ENCODE measurements at regions of chr13 and their contacts with region 1.

Region 1: DNA sequence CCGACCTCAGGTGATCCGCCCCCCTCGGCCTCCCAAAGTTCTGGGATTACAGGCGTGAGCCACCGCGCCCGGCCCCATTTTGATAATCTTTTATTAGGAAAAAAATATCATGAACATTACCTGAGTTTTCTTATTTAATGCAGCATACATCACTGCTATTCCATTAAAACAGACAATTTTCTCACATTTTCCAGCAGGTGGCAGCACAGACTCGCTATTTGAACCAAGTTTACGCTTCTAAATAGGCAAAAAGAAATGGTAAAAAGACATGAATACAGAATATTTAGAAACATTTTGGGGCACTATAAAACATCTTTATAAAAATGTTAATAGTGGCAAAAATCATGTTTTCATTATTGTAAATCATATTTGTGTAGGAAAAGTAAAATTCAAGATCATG is 903.1 kb downstream of the SLITRK6 start:
- DNase-seq: peak; percentile 51
- H3K4me3 ChIP-seq: peak overlapping the region in 1 of 2 experiments; percentile 45; a peak in 1 of 4 replicates
- H3K27ac ChIP-seq: no peak overlapping the region
- H3K4me1 ChIP-seq: no peaks in the 10 kb centered on the region
- H3K27me3 ChIP-seq: no peaks in the 10 kb centered on the region
- CTCF ChIP-seq: peak; percentile 81
- EP300 ChIP-seq: no peak
- RAD21 ChIP-seq: peak; percentile 91

Region 2: DNA sequence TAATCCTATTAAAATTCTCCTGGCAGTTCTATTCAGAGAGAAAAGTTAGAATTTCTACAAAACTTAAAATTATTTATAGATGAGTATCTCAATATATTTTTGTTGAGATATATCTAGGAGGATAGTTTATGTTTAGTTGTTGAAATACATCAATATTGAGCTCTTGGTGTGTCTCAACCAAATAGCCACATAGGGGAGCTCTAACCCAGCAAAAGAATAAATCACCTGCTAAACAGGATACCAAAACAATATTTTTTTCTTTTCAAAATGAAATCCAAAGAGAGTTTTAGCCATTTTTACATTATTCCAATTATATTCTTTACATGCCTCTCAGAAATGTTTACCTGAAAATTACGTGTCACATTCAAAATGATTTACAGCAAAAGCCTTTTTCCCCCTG is 51.7 kb before region 1 on chr13:
- CTCF ChIA-PET with region 1: interaction called, 18 read pairs
- POLR2A ChIA-PET with region 1: no interaction called
- DNase-seq: peak; percentile 32
- H3K4me3 ChIP-seq: no peak overlapping the region
- H3K27ac ChIP-seq: no peak overlapping the region
- H3K4me1 ChIP-seq: no peaks in the 10 kb centered on the region; a peak in 1 of 4 replicates
- H3K27me3 ChIP-seq: no peaks in the 10 kb centered on the region
- CTCF ChIP-seq: peak; percentile 67
- EP300 ChIP-seq: no peak
- RAD21 ChIP-seq: peak; percentile 87

Region 3: DNA sequence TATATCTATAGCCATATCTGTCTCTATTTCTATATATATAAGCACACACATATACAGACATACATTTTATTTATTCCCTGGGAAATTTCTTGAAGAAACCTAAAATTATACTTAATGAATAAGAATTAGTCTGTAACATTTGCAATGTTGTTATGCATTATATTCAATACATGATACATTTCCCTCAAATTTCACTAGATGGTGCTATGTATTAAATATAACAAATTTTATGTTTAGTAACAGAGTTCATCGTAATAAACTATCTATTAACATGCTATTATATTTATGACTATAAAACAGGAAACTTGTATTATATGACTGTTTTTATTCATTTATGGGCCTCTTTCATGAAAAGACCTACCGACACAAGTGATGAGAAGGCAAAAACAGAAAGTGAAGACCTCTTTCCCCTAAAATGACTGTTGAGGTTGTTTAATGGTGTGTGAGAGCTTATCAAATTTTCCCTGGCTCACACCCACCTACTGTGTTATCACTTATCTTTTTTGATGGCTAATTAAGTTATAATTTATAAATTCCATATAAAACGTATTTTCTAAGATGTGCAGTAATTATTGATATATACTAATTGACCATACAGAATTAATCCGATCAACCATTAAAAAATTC is 21.2 kb after region 1 on chr13:
- CTCF ChIA-PET with region 1: interaction called, 10 read pairs
- POLR2A ChIA-PET with region 1: no interaction called
- DNase-seq: peak; percentile 34
- H3K4me3 ChIP-seq: no peak overlapping the region
- H3K27ac ChIP-seq: peak overlapping the region in 1 of 2 experiments; percentile 43; a peak in 1 of 4 replicates
- H3K4me1 ChIP-seq: no peaks in the 10 kb centered on the region; a peak in 1 of 4 replicates
- H3K27me3 ChIP-seq: no peaks in the 10 kb centered on the region
- CTCF ChIP-seq: peak; percentile 72
- EP300 ChIP-seq: no peak
- RAD21 ChIP-seq: peak; percentile 57

Region 4: GRCh38 chr13:85806553-85807175 is 910.5 kb after region 1 on chr13:
- CTCF ChIA-PET with region 1: interaction called, 11 read pairs
- POLR2A ChIA-PET with region 1: no interaction called
- DNase-seq: peak; percentile 17
- H3K4me3 ChIP-seq: no peak overlapping the region
- H3K27ac ChIP-seq: no peak overlapping the region
- H3K4me1 ChIP-seq: no peaks in the 10 kb centered on the region; a peak in 1 of 4 replicates
- H3K27me3 ChIP-seq: no peaks in the 10 kb centered on the region
- CTCF ChIP-seq: peak; percentile 82
- EP300 ChIP-seq: no peak
- RAD21 ChIP-seq: peak; percentile 95

Region 5: DNA sequence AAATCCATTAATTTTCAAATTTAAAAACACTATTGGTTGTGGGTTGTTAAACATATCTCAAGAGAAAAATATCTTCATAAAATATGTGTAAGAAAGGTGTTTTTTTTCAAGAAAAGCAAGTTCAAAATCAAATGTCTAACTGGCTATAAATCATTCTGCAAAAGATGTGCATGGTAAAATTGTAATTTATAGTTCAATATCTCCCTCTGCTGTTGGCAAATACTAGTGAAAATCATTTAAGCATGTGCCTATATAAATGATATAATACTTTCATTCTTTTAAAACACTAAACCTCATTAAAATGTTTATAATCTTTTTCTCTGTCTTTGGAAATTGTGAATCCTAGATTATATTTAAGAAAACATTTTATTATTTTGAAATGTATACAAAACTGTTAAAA is 920.3 kb after region 1 on chr13:
- CTCF ChIA-PET with region 1: interaction called, 16 read pairs
- POLR2A ChIA-PET with region 1: no interaction called
- DNase-seq: no peak
- H3K4me3 ChIP-seq: no peak overlapping the region
- H3K27ac ChIP-seq: no peak overlapping the region; a peak in 1 of 4 replicates
- H3K4me1 ChIP-seq: peaks cover 0 to 3% of the 10 kb centered on the region in 2 experiments; a peak in 2 of 4 replicates
- H3K27me3 ChIP-seq: no peaks in the 10 kb centered on the region
- CTCF ChIP-seq: peak; percentile 64
- EP300 ChIP-seq: no peak
- RAD21 ChIP-seq: peak; percentile 67

Measured in SK-N-SH (cell line).